SK-N-SH (cell line): ENCODE measurements at regions of chr15 and their contacts with region 1.

Region 1: DNA sequence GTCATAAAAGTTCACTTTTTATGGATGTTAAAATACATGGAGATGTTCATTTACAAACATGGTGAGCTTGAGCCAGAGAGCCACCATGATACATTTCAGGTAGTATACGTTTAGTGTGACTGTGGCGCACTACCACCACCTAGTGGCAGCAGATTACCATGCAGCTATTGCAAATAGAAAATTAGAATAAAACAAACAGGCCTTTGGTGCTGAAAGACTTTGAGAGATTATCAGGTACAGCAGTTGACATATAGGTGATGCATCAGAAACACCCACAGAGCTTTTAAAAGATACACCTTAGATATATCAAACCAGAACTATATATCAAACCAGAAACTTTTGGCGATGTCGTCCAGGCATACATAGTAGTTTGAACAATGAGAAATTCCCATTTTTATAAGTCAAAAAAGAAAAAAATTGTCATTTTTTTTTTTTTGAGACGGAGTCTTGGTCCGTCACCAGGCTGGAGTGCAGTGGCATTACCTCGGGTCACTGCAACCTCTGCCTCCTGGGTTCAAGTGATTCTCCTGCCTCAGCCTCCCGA is 42.0 kb upstream of the ICE2 start:
- DNase-seq: peak; percentile 54
- H3K4me3 ChIP-seq: peak overlapping the region in 1 of 2 experiments; percentile 35; a peak in 1 of 4 replicates
- H3K27ac ChIP-seq: no peak overlapping the region
- H3K4me1 ChIP-seq: peaks cover 1 to 16% of the 10 kb centered on the region in 2 experiments; a peak in 3 of 4 replicates
- H3K27me3 ChIP-seq: no peaks in the 10 kb centered on the region
- CTCF ChIP-seq: peak; percentile 97
- EP300 ChIP-seq: no peak
- RAD21 ChIP-seq: peak; percentile 93

Region 2: GRCh38 chr15:60362321-60363086 is 158.4 kb before region 1 on chr15:
- CTCF ChIA-PET with region 1: interaction called, 124 read pairs
- POLR2A ChIA-PET with region 1: no interaction called
- DNase-seq: no peak
- H3K4me3 ChIP-seq: no peak overlapping the region
- H3K27ac ChIP-seq: peak overlapping the region; percentile 65 to 97
- H3K4me1 ChIP-seq: peaks cover 27 to 38% of the 10 kb centered on the region in 2 experiments
- H3K27me3 ChIP-seq: no peaks in the 10 kb centered on the region
- CTCF ChIP-seq: no peak
- EP300 ChIP-seq: 0 out of 4 replicates have a peak, but pooled peaks of 1 of the 2 experiments have one; percentile 12
- RAD21 ChIP-seq: no peak

Region 3: GRCh38 chr15:60478566-60479360 is 42.1 kb before region 1 on chr15 and contains the start of gene ICE2:
- CTCF ChIA-PET with region 1: interaction called, 11 read pairs
- POLR2A ChIA-PET with region 1: no interaction called
- DNase-seq: peak; percentile 90
- H3K4me3 ChIP-seq: peak within 1 kb of the TSS; percentile 86 to 96
- H3K27ac ChIP-seq: peak within 1 kb of the TSS; percentile 85 to 94
- H3K4me1 ChIP-seq: peaks cover 14 to 20% of the 10 kb centered on the region in 2 experiments; a peak in 3 of 4 replicates
- H3K27me3 ChIP-seq: no peaks in the 10 kb centered on the region
- CTCF ChIP-seq: no peak
- EP300 ChIP-seq: no peak
- RAD21 ChIP-seq: no peak
- polyA plus RNA-seq, gene ICE2: 18.0 and 19.0 TPM in 2 replicates

Region 4: GRCh38 chr15:60496853-60497252 is 24.0 kb before region 1 on chr15:
- CTCF ChIA-PET with region 1: interaction called, 22 read pairs
- POLR2A ChIA-PET with region 1: no interaction called
- DNase-seq: no peak
- H3K4me3 ChIP-seq: no peak overlapping the region
- H3K27ac ChIP-seq: no peak overlapping the region
- H3K4me1 ChIP-seq: no peaks in the 10 kb centered on the region
- H3K27me3 ChIP-seq: no peaks in the 10 kb centered on the region
- CTCF ChIP-seq: no peak
- EP300 ChIP-seq: no peak
- RAD21 ChIP-seq: no peak

Region 5: DNA sequence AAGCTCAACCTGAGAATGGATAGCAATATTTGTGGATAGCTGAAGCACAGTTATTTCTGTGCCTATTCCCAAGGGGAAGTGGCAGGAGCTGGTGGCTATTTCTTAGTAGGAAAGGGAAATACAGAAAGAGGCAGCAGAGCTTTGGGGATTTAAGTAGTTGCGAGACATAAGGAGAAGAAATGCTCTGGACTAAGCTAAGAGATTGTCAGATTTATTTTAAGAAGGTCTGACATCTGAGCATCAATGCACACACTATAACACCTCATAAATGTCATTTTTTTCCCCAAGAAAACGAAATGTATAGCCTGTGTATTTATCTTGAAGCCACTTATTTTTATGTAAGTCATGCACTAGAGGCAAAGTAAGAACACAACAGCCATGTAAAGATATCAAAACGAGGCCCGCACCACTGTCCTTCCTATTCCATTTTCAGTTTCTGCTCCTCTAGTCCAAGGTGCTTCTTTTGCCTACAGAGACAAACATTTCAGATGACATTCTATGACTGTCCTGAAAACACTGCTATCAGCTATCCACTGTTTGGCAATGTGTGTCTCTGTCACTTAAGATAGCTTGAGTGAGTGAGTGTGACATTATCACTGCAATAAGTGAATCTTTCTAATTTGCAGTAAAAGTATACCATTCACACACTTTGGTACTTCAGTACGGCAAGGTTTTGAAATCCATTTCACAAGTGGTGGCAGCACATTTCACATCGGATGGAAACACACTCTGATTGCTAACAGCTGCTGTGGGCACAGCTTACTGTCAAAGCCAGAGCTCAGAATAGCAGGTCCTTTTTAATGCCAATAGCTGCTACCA is 20.8 kb after region 1 on chr15:
- CTCF ChIA-PET with region 1: interaction called, 15 read pairs
- POLR2A ChIA-PET with region 1: no interaction called
- DNase-seq: no peak
- H3K4me3 ChIP-seq: no peak overlapping the region
- H3K27ac ChIP-seq: no peak overlapping the region
- H3K4me1 ChIP-seq: no peaks in the 10 kb centered on the region; a peak in 1 of 4 replicates
- H3K27me3 ChIP-seq: no peaks in the 10 kb centered on the region
- CTCF ChIP-seq: no peak
- EP300 ChIP-seq: no peak
- RAD21 ChIP-seq: no peak

Region 6: GRCh38 chr15:60916679-60917460 is 396.0 kb after region 1 on chr15:
- CTCF ChIA-PET with region 1: interaction called, 13 read pairs
- POLR2A ChIA-PET with region 1: no interaction called
- DNase-seq: peak; percentile 73
- H3K4me3 ChIP-seq: no peak overlapping the region; a peak in 1 of 4 replicates
- H3K27ac ChIP-seq: no peak overlapping the region
- H3K4me1 ChIP-seq: peaks cover 0 to 4% of the 10 kb centered on the region in 2 experiments; a peak in 1 of 4 replicates
- H3K27me3 ChIP-seq: no peaks in the 10 kb centered on the region
- CTCF ChIP-seq: peak; percentile 83
- EP300 ChIP-seq: no peak
- RAD21 ChIP-seq: peak; percentile 89